ENCODE measurements at regions of chr6 and their contacts with region 1.

Region 1: GRCh38 chr6:96897383-96898240 is at the start of gene NDUFAF4:
- DNase-seq: peak; percentile 96
- H3K4me3 ChIP-seq: peak within 1 kb of the TSS; percentile 97
- H3K27ac ChIP-seq: peak within 1 kb of the TSS; percentile 77
- H3K4me1 ChIP-seq: peaks cover 33% of the 10 kb centered on the region
- CTCF ChIP-seq: peak; percentile 88
- total RNA-seq, gene NDUFAF4: 29.3 and 31.5 TPM in 2 replicates

Region 2: GRCh38 chr6:96611342-96611991 is 286.1 kb before region 1 on chr6:
- CTCF ChIA-PET with region 1: no interaction called
- POLR2A ChIA-PET with region 1: interaction called, 5 read pairs
- intact Hi-C with region 1: loop called (anchors 5 kb)
- DNase-seq: peak; percentile 66
- H3K4me3 ChIP-seq: peak overlapping the region; percentile 14
- H3K27ac ChIP-seq: peak overlapping the region; percentile 76
- H3K4me1 ChIP-seq: peaks cover 63% of the 10 kb centered on the region
- CTCF ChIP-seq: no peak

Region 3: DNA sequence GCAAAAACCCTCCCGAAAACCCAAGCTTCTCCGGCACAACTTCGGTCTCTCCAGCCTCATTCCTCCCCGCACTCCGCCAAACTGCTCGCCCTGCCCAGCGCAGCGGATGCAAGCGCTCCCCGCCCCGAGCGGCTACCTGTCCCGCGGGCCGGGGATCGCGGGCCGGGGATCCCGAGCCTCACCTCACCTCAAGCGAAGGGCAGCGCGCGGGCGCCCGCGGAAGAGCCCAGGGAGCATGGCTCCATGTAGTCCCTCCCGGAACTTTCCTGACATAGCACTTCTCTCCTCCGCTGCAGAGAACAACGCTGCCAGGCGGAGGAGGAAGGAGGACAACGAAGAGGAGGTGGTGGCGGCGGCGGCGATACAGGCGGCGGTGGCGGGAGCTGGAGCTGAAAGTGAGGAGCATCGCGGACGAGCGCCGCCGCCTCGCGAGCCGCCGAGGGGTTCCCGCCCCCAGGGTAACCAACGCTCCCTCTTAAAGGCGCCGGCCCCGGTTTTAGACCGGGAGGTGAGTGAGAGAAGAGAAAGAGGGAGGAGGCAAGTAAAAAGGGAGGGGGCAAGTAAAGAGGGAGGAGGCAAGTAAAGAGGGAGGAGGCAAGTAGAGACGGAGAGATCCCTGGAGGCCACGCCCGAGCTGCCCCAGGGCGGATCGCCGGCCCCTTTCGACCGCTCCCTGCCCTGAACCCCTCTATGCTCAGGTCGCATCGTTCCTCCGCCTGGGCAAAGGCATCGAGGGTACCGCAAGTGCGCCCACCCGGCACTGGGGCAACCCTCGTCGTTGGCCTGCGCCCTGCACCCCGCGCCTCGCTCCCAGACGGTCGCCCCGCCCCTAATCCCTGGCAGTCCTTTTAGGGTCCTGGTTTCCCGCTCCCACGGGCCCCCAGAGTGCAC is 60.3 kb before region 1 on chr6 and contains the start of gene GPR63:
- CTCF ChIA-PET with region 1: no interaction called
- POLR2A ChIA-PET with region 1: no interaction called
- intact Hi-C with region 1: loop called (anchors 1 kb)
- DNase-seq: peak; percentile 64
- H3K4me3 ChIP-seq: peak within 1 kb of the TSS; percentile 72
- H3K27ac ChIP-seq: no peak within 1 kb of the TSS
- H3K4me1 ChIP-seq: peaks cover 6% of the 10 kb centered on the region
- CTCF ChIP-seq: no peak
- total RNA-seq, gene GPR63: 0.57 and 1.0 TPM in 2 replicates

Region 4: GRCh38 chr6:96923871-96924493 is 26.4 kb after region 1 on chr6:
- CTCF ChIA-PET with region 1: interaction called, 6 read pairs
- POLR2A ChIA-PET with region 1: interaction called, 20 read pairs
- intact Hi-C with region 1: loop called (anchors 1 kb)
- DNase-seq: no peak
- H3K4me3 ChIP-seq: peak overlapping the region; percentile 93
- H3K27ac ChIP-seq: peak overlapping the region; percentile 58
- H3K4me1 ChIP-seq: peaks cover 20% of the 10 kb centered on the region
- CTCF ChIP-seq: no peak

Region 5: DNA sequence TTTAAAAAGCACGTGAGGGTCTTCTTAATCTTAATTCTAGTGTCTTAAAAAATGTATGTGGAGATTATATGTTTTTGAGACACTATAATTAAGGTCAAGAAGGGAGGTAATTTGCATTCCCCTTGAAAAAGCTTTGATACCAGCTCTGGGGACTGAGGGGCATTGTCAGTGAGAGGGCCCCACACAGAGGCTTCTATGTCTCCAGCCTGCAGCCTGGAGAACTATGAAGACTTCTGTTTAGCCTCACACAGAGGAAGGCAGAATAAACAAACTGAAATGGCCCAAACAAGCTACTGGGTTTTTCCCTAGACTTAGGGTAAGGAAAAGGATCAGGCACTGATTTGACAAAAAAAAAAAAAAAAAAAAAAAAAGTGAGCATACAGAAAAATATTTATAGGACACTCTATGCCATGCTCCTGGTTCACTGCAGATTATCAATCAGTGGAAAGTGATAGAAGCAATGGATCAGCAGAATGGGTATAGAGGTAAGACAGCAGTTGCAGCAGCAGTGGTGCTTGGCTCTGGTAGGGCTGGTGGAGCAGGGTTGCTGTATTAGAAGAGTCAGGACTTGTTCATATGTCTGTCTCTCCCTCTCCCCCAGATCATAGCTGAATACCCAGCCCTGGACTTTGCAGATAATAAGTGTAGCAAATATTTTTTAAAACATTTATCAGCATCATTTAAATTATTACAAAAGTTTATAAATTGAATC is 112.3 kb after region 1 on chr6:
- CTCF ChIA-PET with region 1: no interaction called
- POLR2A ChIA-PET with region 1: no interaction called
- intact Hi-C with region 1: no loop called
- DNase-seq: no peak
- H3K4me3 ChIP-seq: no peak overlapping the region
- H3K27ac ChIP-seq: no peak overlapping the region
- H3K4me1 ChIP-seq: no peaks in the 10 kb centered on the region
- CTCF ChIP-seq: no peak

Region 6: GRCh38 chr6:97059473-97059872 is 161.9 kb after region 1 on chr6:
- CTCF ChIA-PET with region 1: interaction called, 4 read pairs
- POLR2A ChIA-PET with region 1: interaction called, 4 read pairs
- intact Hi-C with region 1: loop called (anchors 1 kb)
- DNase-seq: peak; percentile 62
- H3K4me3 ChIP-seq: no peak overlapping the region
- H3K27ac ChIP-seq: no peak overlapping the region
- H3K4me1 ChIP-seq: no peaks in the 10 kb centered on the region
- CTCF ChIP-seq: peak; percentile 91

Measured in OCI-LY7 (cell line).